PC-9 (cell line): ENCODE measurements at regions of chr16 and their contacts with region 1.

Region 1: DNA sequence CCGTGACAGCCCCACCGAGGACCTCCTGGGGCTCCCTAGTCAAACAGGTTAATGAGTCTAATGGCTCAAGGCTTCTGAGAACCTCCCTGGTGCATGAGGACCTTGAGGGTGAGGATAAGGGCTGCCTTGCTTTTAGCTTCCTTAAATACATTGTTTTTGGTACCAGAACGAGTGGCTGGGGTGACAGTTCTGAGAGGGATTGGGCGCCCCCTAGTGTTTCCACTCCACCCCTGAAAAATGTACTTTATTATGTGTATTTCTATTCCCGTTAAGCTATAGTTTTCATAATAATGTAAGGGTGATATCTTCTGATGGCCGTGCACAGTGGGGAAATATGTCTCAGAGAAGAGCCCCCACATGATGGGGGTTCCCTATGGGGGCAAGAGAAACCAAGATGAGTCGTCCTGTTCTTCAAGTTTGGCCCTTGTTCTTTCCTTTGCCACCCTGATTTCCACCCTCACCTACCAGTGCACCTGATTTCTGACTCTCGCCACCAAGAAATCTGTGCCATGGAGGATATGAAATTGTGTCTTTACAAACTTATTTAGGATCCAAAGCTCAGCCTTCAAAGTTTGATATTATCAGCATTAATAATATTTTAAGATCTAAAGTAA is 14.5 kb upstream of the VWA3A start:
- DNase-seq: peak; percentile 36 to 67
- H3K4me3 ChIP-seq: no peak overlapping the region
- H3K27ac ChIP-seq: no peak overlapping the region
- H3K4me1 ChIP-seq: no peaks in the 10 kb centered on the region
- H3K27me3 ChIP-seq: no peaks in the 10 kb centered on the region
- CTCF ChIP-seq: peak; percentile 93

Region 2: DNA sequence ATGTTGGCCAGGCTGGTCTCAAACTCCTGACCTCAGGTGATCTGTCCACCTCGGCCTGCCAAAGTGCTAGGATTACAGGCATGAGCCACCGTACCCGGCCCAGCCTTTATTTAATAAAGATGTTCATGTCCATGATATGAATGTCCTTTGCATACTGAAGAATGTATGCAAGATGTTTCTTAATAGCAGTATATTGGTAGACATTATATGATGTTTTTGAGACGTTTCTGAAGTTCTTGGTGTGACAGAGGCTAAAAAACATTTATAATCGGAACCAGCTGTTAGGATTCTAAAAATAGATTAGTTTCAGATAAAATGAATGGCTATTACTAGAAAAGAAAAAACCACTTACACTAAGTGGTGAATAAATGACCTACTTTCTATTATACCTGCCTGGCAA is 88.7 kb before region 1 on chr16:
- CTCF ChIA-PET with region 1: interaction called, 3 read pairs
- POLR2A ChIA-PET with region 1: no interaction called
- intact Hi-C with region 1: loop called (anchors 5 kb)
- DNase-seq: no peak
- H3K4me3 ChIP-seq: no peak overlapping the region
- H3K27ac ChIP-seq: no peak overlapping the region
- H3K4me1 ChIP-seq: no peaks in the 10 kb centered on the region
- H3K27me3 ChIP-seq: no peaks in the 10 kb centered on the region
- CTCF ChIP-seq: no peak

Region 3: GRCh38 chr16:22091758-22092600 is 14.2 kb after region 1 on chr16 and contains the start of gene VWA3A:
- CTCF ChIA-PET with region 1: interaction called, 12 read pairs
- POLR2A ChIA-PET with region 1: interaction called, 4 read pairs
- intact Hi-C with region 1: no loop called
- DNase-seq: peak; percentile 39 to 76
- H3K4me3 ChIP-seq: no peak within 1 kb of the TSS
- H3K27ac ChIP-seq: no peak within 1 kb of the TSS
- H3K4me1 ChIP-seq: no peaks in the 10 kb centered on the region; the same call in 1 of the 2 replicates
- H3K27me3 ChIP-seq: no peaks in the 10 kb centered on the region
- CTCF ChIP-seq: no peak
- total RNA-seq, gene VWA3A: 0.73 and 0.83 TPM in 2 replicates

Region 4: DNA sequence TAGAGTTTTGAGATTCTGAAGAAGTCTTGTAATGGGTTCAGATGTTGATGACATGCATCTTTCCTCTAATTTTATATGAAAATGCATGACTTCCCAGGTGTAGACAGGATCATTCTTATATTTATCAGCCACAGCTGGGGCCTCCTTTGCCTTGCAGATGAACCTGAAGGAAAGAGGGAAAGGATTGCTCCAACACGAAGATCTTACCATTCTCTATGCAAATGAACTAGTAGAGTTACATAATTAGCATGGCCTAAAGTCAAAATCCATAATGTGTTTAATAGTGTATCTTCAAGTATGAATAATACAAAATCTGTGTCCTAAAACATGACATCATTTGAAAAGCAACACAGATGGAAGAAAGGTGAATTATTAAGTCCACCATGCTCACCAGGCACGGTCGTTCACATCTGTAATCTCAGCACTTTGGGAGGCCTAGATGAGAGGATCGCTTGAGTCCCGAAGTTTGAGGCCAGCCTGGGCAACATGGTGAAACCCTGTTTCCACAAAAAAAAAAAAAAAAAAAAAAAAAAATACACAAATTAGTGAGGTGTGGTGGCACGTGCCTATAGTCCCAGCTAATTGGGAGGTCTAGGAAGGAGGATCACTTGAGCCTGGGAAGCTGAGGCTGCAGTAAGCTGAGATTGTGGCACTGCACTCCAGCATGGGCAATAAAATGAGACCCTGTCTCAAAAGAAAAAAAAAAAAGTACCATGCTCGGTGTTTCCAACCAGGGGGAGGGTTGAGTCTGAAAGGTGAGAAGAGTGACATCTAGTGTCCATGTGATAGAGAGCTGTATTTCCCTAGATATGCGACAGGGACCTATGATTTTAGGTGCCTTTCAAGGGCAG is 20.8 kb after region 1 on chr16:
- CTCF ChIA-PET with region 1: interaction called, 18 read pairs
- POLR2A ChIA-PET with region 1: no interaction called
- intact Hi-C with region 1: no loop called
- DNase-seq: peak; percentile 27 to 55
- H3K4me3 ChIP-seq: peak overlapping the region; percentile 34; the same call in 1 of the 2 replicates
- H3K27ac ChIP-seq: no peak overlapping the region
- H3K4me1 ChIP-seq: no peaks in the 10 kb centered on the region
- H3K27me3 ChIP-seq: no peaks in the 10 kb centered on the region
- CTCF ChIP-seq: peak; percentile 66